ENCODE measurements at regions of chr5 and their contacts with region 1.

Region 1: DNA sequence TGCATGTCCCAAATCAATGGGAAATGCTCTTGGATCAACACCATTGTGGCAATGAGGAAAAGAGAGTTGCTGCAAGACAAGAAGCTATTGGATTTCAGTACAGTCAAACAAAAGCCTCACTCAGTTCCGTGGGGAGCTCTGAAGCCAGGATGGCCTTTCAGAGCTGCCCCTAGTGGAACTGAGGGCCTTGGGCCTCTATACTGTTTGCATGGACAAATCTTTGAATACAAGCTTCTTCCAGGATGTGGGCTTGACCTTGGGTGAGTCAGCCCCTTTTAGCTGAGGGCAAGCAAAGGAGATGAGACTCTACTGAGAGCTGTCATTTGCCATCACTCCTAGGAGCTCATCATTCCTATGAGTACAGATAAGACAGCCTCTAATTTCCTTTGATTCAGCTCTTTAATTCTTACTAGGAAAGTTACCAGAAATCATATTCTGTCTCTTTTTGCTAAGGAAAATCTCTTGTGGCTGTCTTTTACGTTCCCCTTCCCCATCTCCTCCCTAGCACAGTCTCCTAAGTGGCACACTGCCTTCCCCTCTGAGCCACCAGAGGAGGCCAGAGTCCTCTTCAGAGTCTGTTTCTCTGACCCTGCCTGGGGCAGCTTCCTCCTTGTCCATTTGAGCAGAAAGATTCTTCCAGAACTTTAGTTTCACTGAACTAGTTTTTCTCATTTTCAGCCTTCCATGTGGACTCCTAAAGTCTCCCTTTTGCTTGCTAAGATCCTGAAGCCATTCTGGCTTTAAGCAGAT is 168.8 kb upstream of the POC5 start:
- DNase-seq: no peak
- H3K4me3 ChIP-seq: no peak overlapping the region
- H3K27ac ChIP-seq: no peak overlapping the region
- H3K4me1 ChIP-seq: no peaks in the 10 kb centered on the region
- H3K27me3 ChIP-seq: no peaks in the 10 kb centered on the region
- CTCF ChIP-seq: peak; percentile 63 to 70 (median 67)
- EP300 ChIP-seq: no peak
- POLR2A ChIP-seq: no peak
- RAD21 ChIP-seq: peak; percentile 82 to 84

Region 2: GRCh38 chr5:75869889-75870288 is 16.1 kb before region 1 on chr5:
- CTCF ChIA-PET with region 1: interaction called, 17 read pairs
- POLR2A ChIA-PET with region 1: no interaction called
- DNase-seq: no peak
- H3K4me3 ChIP-seq: no peak overlapping the region
- H3K27ac ChIP-seq: no peak overlapping the region
- H3K4me1 ChIP-seq: no peaks in the 10 kb centered on the region
- H3K27me3 ChIP-seq: no peaks in the 10 kb centered on the region
- CTCF ChIP-seq: no peak
- EP300 ChIP-seq: no peak
- POLR2A ChIP-seq: no peak
- RAD21 ChIP-seq: no peak

Region 3: GRCh38 chr5:76069061-76069735 is 183.2 kb after region 1 on chr5:
- CTCF ChIA-PET with region 1: interaction called, 14 read pairs
- POLR2A ChIA-PET with region 1: no interaction called
- DNase-seq: no peak
- H3K4me3 ChIP-seq: no peak overlapping the region
- H3K27ac ChIP-seq: no peak overlapping the region
- H3K4me1 ChIP-seq: no peaks in the 10 kb centered on the region
- H3K27me3 ChIP-seq: no peaks in the 10 kb centered on the region; a peak in 1 of 7 replicates
- CTCF ChIP-seq: no peak
- EP300 ChIP-seq: no peak
- POLR2A ChIP-seq: no peak
- RAD21 ChIP-seq: no peak

Region 4: DNA sequence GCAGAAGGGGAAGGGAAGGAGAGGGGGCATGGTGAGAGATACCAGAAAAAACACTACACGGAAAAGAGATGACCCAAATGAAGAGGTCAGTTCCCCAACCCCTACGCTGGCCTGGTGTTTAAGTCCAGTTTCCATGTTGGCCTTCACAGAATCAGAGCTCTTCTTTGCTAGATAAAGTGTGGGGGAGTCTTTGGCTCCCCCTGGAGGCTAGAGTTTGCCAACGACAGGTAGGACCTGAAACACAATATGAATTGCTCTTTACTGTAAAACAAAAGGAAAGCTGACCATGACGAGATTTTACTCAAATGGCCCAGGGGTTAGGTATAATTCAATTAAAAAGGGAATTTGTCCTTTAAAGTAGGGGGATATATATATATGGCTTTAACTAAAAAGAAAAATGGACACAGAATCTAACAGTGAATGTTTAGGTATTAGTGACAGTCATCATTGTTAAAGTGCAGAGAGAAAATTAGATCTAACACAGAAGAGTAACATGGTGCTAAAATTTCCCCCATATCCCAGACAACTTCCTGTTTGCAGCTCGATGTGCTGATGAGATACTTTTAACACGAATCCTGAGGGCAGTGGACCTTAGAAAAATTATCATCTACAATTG is 289.1 kb after region 1 on chr5:
- CTCF ChIA-PET with region 1: interaction called, 13 read pairs
- POLR2A ChIA-PET with region 1: no interaction called
- DNase-seq: peak; percentile 66 to 71
- H3K4me3 ChIP-seq: no peak overlapping the region
- H3K27ac ChIP-seq: no peak overlapping the region
- H3K4me1 ChIP-seq: no peaks in the 10 kb centered on the region
- H3K27me3 ChIP-seq: no peaks in the 10 kb centered on the region
- CTCF ChIP-seq: peak; percentile 39 to 86 (median 86)
- EP300 ChIP-seq: no peak
- POLR2A ChIP-seq: no peak
- RAD21 ChIP-seq: peak; percentile 82 to 90

Region 5: DNA sequence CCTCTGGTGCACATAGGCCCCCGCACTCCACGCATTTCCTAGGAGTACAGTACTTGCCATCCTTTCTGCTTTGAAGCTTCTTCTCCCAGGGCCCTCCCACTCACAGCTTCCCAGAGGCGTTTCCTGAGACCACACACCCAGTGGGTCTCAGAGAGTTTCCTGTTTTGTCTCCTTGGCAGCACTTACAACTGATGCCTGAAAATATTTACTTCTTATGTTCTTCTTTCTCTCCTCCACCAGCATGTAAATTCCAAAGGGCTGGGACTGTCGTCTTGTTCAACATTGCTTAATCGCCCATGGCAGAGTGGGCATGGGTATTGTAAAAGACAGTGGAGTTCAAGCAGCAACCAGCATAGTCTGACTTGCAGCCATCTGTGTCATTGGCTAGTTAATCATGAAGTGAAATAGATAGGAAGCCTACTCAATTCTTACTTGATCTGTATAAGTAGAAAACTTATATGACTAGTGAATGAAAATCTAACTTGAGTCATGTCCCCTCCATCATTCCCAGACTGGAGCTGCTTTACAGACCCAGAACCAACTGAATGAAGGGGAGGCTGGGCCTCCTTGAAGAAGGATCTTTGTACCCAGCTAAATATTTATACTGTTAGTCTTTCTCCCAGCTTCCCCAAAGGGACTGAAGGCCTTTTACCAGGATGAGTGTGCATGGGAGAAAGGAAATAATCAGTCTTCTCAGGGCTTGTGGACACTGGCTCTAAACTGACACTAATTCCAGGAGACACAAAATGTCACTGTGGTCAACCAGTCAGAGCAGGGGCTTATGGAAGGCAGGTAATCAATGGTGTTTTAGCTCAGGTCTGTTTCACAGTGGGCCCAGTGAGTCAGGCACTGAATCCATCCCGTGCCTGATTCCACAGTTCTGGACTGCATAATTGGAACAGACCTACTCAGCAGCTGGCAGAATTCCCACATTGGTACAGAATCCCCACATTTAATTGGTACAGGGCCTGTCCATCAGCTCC is 313.6 kb after region 1 on chr5:
- CTCF ChIA-PET with region 1: no interaction called
- POLR2A ChIA-PET with region 1: no interaction called
- DNase-seq: no peak
- H3K4me3 ChIP-seq: no peak overlapping the region
- H3K27ac ChIP-seq: no peak overlapping the region
- H3K4me1 ChIP-seq: peaks cover 0 to 11% (median 9%) of the 10 kb centered on the region in 4 experiments; a peak in 3 of 7 replicates
- H3K27me3 ChIP-seq: no peaks in the 10 kb centered on the region
- CTCF ChIP-seq: no peak
- EP300 ChIP-seq: no peak
- POLR2A ChIP-seq: no peak
- RAD21 ChIP-seq: no peak

Region 6: GRCh38 chr5:76256116-76256889 is 370.3 kb after region 1 on chr5:
- CTCF ChIA-PET with region 1: interaction called, 14 read pairs
- POLR2A ChIA-PET with region 1: no interaction called
- DNase-seq: peak in 1 of 2 experiments; percentile 60
- H3K4me3 ChIP-seq: no peak overlapping the region
- H3K27ac ChIP-seq: no peak overlapping the region
- H3K4me1 ChIP-seq: no peaks in the 10 kb centered on the region; a peak in 1 of 7 replicates
- H3K27me3 ChIP-seq: no peaks in the 10 kb centered on the region
- CTCF ChIP-seq: peak; percentile 57 to 88 (median 84)
- EP300 ChIP-seq: no peak
- POLR2A ChIP-seq: no peak
- RAD21 ChIP-seq: peak; percentile 99 to 100

Region 7: GRCh38 chr5:76299592-76299991 is 413.6 kb after region 1 on chr5:
- CTCF ChIA-PET with region 1: no interaction called
- POLR2A ChIA-PET with region 1: no interaction called
- DNase-seq: no peak
- H3K4me3 ChIP-seq: no peak overlapping the region
- H3K27ac ChIP-seq: no peak overlapping the region
- H3K4me1 ChIP-seq: peaks cover 0 to 5% (median 0%) of the 10 kb centered on the region in 4 experiments; a peak in 3 of 7 replicates
- H3K27me3 ChIP-seq: no peaks in the 10 kb centered on the region
- CTCF ChIP-seq: no peak
- EP300 ChIP-seq: no peak
- POLR2A ChIP-seq: no peak
- RAD21 ChIP-seq: no peak